ENCODE measurements at regions of chr2 and their contacts with region 1.

Region 1: GRCh38 chr2:24084386-24085361 is at the start of gene TP53I3:
- DNase-seq: peak; percentile 95 to 97
- ATAC-seq: peak; percentile 86 to 93
- H3K4me3 ChIP-seq: peak within 1 kb of the TSS; percentile 65
- H3K27ac ChIP-seq: peak within 1 kb of the TSS; percentile 91 to 97
- H3K4me1 ChIP-seq: peaks cover 27% of the 10 kb centered on the region
- CTCF ChIP-seq: peak; percentile 98
- EP300 ChIP-seq: no peak
- POLR2A ChIP-seq: peak; percentile 90
- RAD21 ChIP-seq: peak; percentile 75 to 95
- polyA plus RNA-seq, gene TP53I3: 93.7 and 99.1 TPM in 2 replicates

Region 2: GRCh38 chr2:23824777-23825212 is 259.9 kb before region 1 on chr2:
- CTCF ChIA-PET with region 1: interaction called, 40 read pairs
- POLR2A ChIA-PET with region 1: interaction called, 18 read pairs
- DNase-seq: peak; percentile 43 to 60
- ATAC-seq: peak; percentile 79 to 87
- H3K4me3 ChIP-seq: no peak overlapping the region
- H3K27ac ChIP-seq: no peak overlapping the region
- H3K4me1 ChIP-seq: peaks cover 27% of the 10 kb centered on the region
- CTCF ChIP-seq: peak; percentile 88
- EP300 ChIP-seq: no peak
- POLR2A ChIP-seq: no peak
- RAD21 ChIP-seq: peak; percentile 80 to 83

Region 3: GRCh38 chr2:24009680-24010476 is 74.8 kb before region 1 on chr2 and contains the start of gene MFSD2B:
- CTCF ChIA-PET with region 1: interaction called, 12 read pairs
- POLR2A ChIA-PET with region 1: no interaction called
- DNase-seq: no peak
- ATAC-seq: 0 out of 6 replicates have a peak, but pooled peaks of 1 of the 2 experiments have one; percentile 2
- H3K4me3 ChIP-seq: no peak within 1 kb of the TSS
- H3K27ac ChIP-seq: peak within 1 kb of the TSS; percentile 48 to 72
- H3K4me1 ChIP-seq: peaks cover 48% of the 10 kb centered on the region
- CTCF ChIP-seq: no peak
- EP300 ChIP-seq: no peak
- POLR2A ChIP-seq: no peak
- RAD21 ChIP-seq: no peak
- polyA plus RNA-seq, gene MFSD2B: 0.09 and 0.15 TPM in 2 replicates

Region 4: DNA sequence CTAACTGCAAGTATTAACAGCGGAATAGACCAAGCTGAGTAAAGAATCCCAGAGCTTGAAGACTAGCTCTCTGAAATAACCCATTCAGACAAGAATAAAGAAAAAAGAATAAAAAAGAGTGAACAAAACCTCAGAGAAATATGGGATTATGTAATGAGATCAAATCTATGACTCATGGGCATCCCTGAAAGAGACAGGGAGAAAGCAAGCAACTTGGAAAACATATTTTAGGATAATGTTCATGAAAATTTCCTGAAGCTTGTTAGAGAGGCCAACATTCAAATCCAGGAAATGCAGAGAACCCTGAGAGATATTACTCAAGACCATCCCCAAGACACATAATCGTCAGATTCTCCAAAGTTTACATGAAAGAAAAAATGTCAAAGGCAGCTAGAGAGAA is 21.1 kb after region 1 on chr2:
- CTCF ChIA-PET with region 1: interaction called, 57 read pairs
- POLR2A ChIA-PET with region 1: interaction called, 37 read pairs
- DNase-seq: no peak
- ATAC-seq: no peak
- H3K4me3 ChIP-seq: no peak overlapping the region
- H3K27ac ChIP-seq: peak overlapping the region in 1 of 2 experiments; percentile 14; a peak in 1 of 6 replicates
- H3K4me1 ChIP-seq: peaks cover 23% of the 10 kb centered on the region
- CTCF ChIP-seq: no peak
- EP300 ChIP-seq: no peak
- POLR2A ChIP-seq: no peak
- RAD21 ChIP-seq: no peak

Region 5: GRCh38 chr2:24123195-24123921 is 38.7 kb after region 1 on chr2 and contains the starts of genes FAM228B and PFN4:
- CTCF ChIA-PET with region 1: interaction called, 75 read pairs
- POLR2A ChIA-PET with region 1: interaction called, 78 read pairs
- DNase-seq: peak; percentile 89 to 91
- ATAC-seq: peak; percentile 95 to 98
- H3K4me3 ChIP-seq: peak within 1 kb of the TSS; percentile 72
- H3K27ac ChIP-seq: peak within 1 kb of the TSS; percentile 94 to 95
- H3K4me1 ChIP-seq: peaks cover 21% of the 10 kb centered on the region; the same call in 2 of the 3 replicates
- CTCF ChIP-seq: no peak
- EP300 ChIP-seq: no peak; a peak in 1 of 5 replicates
- POLR2A ChIP-seq: peak; percentile 55
- RAD21 ChIP-seq: no peak
- polyA plus RNA-seq, gene FAM228B: 7.6 and 8.2 TPM in 2 replicates
- polyA plus RNA-seq, gene PFN4: 2.0 and 2.3 TPM in 2 replicates

Region 6: DNA sequence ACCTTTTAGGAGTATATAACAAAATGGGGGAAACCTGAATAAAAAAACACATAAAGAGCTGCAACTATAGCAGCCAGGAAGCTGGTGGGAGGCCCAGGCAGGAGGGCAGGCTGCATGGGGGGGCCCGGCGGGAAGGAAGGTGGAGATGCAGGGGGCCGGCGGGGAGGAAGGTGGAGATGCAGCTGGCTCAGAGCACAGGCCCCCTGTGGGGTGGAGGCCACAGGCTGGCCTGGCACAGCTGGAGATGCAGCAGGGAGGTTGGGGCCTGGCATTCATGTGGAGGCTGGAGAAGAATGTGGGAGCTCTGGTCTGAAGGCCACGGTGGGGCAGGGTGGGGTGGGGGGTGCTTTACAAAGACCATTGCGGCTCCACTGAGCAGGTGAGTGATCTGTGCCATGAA is 121.6 kb after region 1 on chr2:
- CTCF ChIA-PET with region 1: interaction called, 11 read pairs
- POLR2A ChIA-PET with region 1: no interaction called
- DNase-seq: no peak
- ATAC-seq: no peak
- H3K4me3 ChIP-seq: no peak overlapping the region
- H3K27ac ChIP-seq: no peak overlapping the region
- H3K4me1 ChIP-seq: no peaks in the 10 kb centered on the region
- CTCF ChIP-seq: no peak
- EP300 ChIP-seq: no peak
- POLR2A ChIP-seq: no peak
- RAD21 ChIP-seq: no peak

Region 7: DNA sequence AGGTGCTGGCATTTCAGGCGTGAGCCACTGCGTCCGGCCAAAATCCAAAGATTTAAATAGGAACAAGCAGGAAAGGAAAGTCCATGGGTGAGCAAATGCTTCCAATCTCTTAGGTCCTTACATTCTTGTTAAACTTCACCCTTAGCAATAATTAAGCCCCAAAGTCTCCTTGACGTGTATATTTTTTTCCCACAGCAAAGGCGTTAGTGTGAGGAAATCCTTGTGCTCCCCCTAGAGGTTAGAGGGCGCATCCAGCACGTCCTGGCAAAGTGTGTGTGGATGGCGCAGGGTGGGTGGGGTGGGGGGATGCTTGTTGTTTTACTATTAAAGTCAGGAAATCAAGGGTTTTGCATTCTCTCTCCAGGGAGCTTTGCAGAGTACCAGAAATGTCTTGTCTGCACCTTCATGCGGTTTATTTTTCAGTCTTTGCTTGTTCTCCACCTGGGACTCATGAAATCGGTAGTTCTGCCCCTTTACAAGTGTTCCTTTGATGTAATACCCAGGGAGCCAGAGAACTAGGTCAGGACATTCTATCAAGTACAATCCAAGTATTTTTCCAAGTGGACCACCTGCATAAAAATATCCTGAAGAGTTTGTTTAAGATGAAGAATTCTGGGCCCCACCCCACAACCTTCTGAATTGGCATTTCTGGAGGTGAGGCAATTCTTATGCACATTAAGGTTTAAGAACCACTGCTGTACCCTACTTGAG is 297.8 kb after region 1 on chr2:
- CTCF ChIA-PET with region 1: interaction called, 25 read pairs
- POLR2A ChIA-PET with region 1: no interaction called
- DNase-seq: peak; percentile 79 to 80
- ATAC-seq: peak; percentile 96
- H3K4me3 ChIP-seq: no peak overlapping the region
- H3K27ac ChIP-seq: no peak overlapping the region
- H3K4me1 ChIP-seq: no peaks in the 10 kb centered on the region
- CTCF ChIP-seq: peak; percentile 92
- EP300 ChIP-seq: no peak
- POLR2A ChIP-seq: no peak
- RAD21 ChIP-seq: peak; percentile 91 to 92

Region 8: GRCh38 chr2:24448797-24449196 is 364.1 kb after region 1 on chr2:
- CTCF ChIA-PET with region 1: no interaction called
- POLR2A ChIA-PET with region 1: no interaction called
- DNase-seq: no peak
- ATAC-seq: no peak
- H3K4me3 ChIP-seq: no peak overlapping the region
- H3K27ac ChIP-seq: no peak overlapping the region
- H3K4me1 ChIP-seq: no peaks in the 10 kb centered on the region
- CTCF ChIP-seq: no peak
- EP300 ChIP-seq: no peak
- POLR2A ChIP-seq: no peak
- RAD21 ChIP-seq: no peak

Measured in A549 (cell line).